Uterus (tissue), 4 donors: ENCODE measurements at regions of chr2 and their contacts with region 1.

Region 1: GRCh38 chr2:202178342-202178958 is 59.9 kb downstream of the SUMO1 start:
- DNase-seq: peak; percentile 43 to 74
- H3K4me3 ChIP-seq: no peak overlapping the region
- H3K27ac ChIP-seq: no peak overlapping the region
- H3K4me1 ChIP-seq: no peaks in the 10 kb centered on the region
- H3K27me3 ChIP-seq: no peaks in the 10 kb centered on the region
- CTCF ChIP-seq: peak; percentile 77 to 85 (median 83)
- POLR2A ChIP-seq: no peak

Region 2: DNA sequence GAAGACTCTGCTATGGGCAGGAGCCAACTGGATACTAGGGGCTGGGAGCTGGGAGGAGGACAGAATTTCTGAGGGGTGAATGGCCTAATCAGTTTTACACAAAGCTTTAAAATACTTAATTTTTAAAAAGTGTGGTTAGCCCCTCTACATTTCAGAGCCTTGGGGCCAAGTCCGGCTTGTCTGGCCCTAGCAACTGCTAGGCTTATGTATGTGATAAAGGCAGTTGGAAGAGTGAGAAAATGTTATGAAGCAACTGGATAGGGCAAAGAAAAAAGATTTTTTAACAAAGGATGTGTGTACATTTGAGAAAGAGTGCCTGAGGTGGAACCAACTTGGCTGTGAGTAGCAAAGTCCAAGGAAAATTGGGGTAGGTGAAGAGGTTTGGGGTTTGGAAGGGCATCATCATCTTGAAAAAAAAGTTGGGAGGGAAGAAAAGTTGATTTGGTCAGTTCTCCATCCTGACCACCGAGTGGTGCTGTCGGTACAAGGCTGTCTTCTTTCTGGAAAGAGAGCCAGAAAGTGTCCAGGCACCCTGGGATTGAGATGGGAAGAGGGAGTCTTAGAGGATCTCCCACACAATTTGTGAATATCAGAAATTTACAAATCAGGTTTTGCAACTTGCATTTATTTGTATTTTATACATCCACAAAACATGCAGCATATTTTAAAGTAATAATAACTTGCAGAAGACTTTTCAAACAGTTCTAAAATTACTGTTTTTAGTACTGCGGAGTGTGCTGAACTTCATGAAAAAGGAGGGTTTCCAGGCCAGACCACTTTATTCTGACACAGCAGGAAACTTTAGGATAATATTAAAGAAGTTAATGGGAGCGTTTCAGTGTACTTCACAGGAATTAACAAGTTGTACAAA is 382.6 kb before region 1 on chr2:
- intact Hi-C with region 1: loop called (anchors 10 kb)
- DNase-seq: no peak
- H3K4me3 ChIP-seq: no peak overlapping the region
- H3K27ac ChIP-seq: no peak overlapping the region
- H3K4me1 ChIP-seq: no peaks in the 10 kb centered on the region
- H3K27me3 ChIP-seq: no peaks in the 10 kb centered on the region
- CTCF ChIP-seq: peak; percentile 42 to 63 (median 52)
- POLR2A ChIP-seq: no peak

Region 3: DNA sequence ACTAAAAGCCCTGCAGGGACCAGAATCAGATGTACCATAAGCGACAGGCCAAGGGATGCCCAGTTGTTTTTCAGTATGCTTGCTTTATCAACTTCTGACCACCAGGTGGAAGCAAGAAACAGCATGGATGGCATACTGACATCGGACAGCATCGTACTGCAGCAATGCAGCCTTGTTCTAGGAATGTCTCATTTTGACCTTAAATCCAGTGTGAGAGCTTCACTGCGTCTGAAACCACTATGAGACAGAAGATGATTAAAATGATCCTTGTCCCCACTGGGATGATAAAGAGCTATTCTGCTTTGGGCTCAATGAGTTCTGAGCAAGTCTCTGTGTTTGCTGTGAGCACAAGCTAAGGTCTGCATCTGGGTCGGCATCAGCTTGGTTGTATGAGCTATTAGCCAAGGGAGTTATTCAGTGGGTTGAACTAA is 317.8 kb before region 1 on chr2:
- intact Hi-C with region 1: loop called (anchors 2 kb)
- DNase-seq: peak; percentile 32 to 60
- H3K4me3 ChIP-seq: no peak overlapping the region
- H3K27ac ChIP-seq: no peak overlapping the region
- H3K4me1 ChIP-seq: no peaks in the 10 kb centered on the region
- H3K27me3 ChIP-seq: no peaks in the 10 kb centered on the region
- CTCF ChIP-seq: peak; percentile 80 to 85 (median 83)
- POLR2A ChIP-seq: no peak